Transverse colon (tissue), 4 donors: ENCODE measurements at regions of chr1 and their contacts with region 1.

Region 1: GRCh38 chr1:96039910-96040309 is 681.7 kb upstream of the PTBP2 start:
- DNase-seq: no peak
- H3K4me3 ChIP-seq: no peak overlapping the region
- H3K27ac ChIP-seq: no peak overlapping the region
- H3K4me1 ChIP-seq: no peaks in the 10 kb centered on the region
- H3K27me3 ChIP-seq: no peaks in the 10 kb centered on the region
- CTCF ChIP-seq: no peak
- EP300 ChIP-seq: no peak
- POLR2A ChIP-seq: no peak

Region 2: DNA sequence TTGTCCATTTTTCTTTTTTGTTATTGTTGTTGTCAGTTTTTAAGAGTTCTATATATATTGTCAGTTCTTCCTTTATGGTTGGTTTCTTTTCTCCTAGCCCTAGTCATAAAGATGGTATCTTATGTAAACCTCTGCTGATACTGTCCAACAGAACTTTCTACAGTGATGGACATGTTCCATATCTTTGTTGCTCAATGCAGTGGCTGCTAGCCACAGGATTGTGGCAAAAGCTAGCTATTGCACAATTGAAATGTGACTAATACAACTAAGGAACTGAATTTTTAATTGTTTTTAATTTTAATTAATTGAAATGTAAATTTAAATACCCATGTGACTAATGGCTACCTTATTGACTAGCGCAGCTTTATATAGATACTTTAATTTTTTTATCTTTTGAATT is 269.9 kb after region 1 on chr1:
- in situ Hi-C with region 1: no loop called
- intact Hi-C with region 1: no loop called
- DNase-seq: no peak
- H3K4me3 ChIP-seq: no peak overlapping the region
- H3K27ac ChIP-seq: no peak overlapping the region
- H3K4me1 ChIP-seq: no peaks in the 10 kb centered on the region
- H3K27me3 ChIP-seq: no peaks in the 10 kb centered on the region
- CTCF ChIP-seq: no peak
- EP300 ChIP-seq: no peak
- POLR2A ChIP-seq: no peak

Region 3: DNA sequence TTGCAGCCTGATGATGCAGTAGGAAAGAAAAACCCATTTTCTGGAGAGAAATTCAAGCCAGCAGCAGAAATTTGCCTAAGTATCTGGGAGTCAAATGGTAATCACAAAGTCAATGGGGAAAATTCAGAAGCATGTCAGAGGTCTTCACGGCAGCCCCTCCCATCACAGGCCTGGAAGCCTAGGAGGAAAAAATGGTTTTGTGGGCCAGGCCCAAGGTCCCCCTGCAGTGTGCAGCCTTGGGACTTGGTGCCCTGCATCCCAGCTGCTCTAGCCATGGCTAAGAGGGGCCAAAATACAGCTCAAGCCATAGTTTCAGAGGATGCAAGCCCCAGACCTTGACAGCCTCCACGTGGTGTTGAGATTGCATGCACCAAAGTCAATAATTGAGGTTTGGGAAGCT is 1016.5 kb after region 1 on chr1:
- in situ Hi-C with region 1: no loop called
- intact Hi-C with region 1: loop called (anchors 5 kb)
- DNase-seq: no peak
- H3K4me3 ChIP-seq: no peak overlapping the region
- H3K27ac ChIP-seq: no peak overlapping the region
- H3K4me1 ChIP-seq: peaks cover 0 to 1% (median 0%) of the 10 kb centered on the region in 4 donors
- H3K27me3 ChIP-seq: no peaks in the 10 kb centered on the region
- CTCF ChIP-seq: no peak
- EP300 ChIP-seq: no peak
- POLR2A ChIP-seq: no peak